Activated CD8-positive, alpha-beta T cell treated with anti-CD3 and anti-CD28 coated beads for 36 hours (primary cell): ENCODE measurements at regions of chr3 and their contacts with region 1.

Region 1: GRCh38 chr3:18740631-18741583 is 315.8 kb upstream of the SATB1 start:
- DNase-seq: peak; percentile 79
- ATAC-seq: peak; percentile 45
- H3K4me3 Mint-ChIP-seq: peak overlapping the region; percentile 58
- H3K27ac Mint-ChIP-seq: peak overlapping the region; percentile 92
- H3K4me1 Mint-ChIP-seq: peaks cover 90% of the 10 kb centered on the region
- H3K27me3 Mint-ChIP-seq: no peaks in the 10 kb centered on the region
- CTCF ChIP-seq: no peak

Region 2: DNA sequence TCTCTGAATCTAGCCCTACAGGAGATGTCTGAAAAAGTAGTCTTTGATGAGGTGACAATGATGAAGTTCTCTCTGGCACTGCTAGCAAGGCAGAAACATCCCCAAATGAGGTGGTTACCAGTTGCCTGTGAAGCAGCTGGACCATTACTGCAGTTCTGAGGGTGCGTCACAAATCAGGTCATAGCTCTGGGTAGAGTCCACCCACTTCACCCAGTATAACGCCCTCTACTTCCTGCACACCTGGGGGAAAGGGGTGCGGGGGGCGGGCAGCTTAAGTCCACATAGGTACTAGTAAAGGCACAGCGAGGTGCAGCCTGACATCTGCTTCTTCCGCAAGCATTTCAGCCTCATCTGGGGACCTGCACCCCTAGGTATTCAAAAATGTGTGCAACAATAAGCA is 302.3 kb before region 1 on chr3:
- CTCF ChIA-PET with region 1: no interaction called
- POLR2A ChIA-PET with region 1: interaction called, 12 read pairs
- intact Hi-C with region 1: no loop called
- DNase-seq: peak; percentile 80
- ATAC-seq: peak; percentile 82
- H3K4me3 Mint-ChIP-seq: peak overlapping the region; percentile 78
- H3K27ac Mint-ChIP-seq: peak overlapping the region; percentile 86
- H3K4me1 Mint-ChIP-seq: peaks cover 30% of the 10 kb centered on the region
- H3K27me3 Mint-ChIP-seq: no peaks in the 10 kb centered on the region
- CTCF ChIP-seq: no peak

Region 3: GRCh38 chr3:18531662-18532236 is 209.2 kb before region 1 on chr3:
- CTCF ChIA-PET with region 1: no interaction called
- POLR2A ChIA-PET with region 1: no interaction called
- intact Hi-C with region 1: no loop called
- DNase-seq: no peak
- ATAC-seq: peak; percentile 79
- H3K4me3 Mint-ChIP-seq: no peak overlapping the region
- H3K27ac Mint-ChIP-seq: no peak overlapping the region
- H3K4me1 Mint-ChIP-seq: peaks cover 13% of the 10 kb centered on the region
- H3K27me3 Mint-ChIP-seq: no peaks in the 10 kb centered on the region
- CTCF ChIP-seq: no peak

Region 4: DNA sequence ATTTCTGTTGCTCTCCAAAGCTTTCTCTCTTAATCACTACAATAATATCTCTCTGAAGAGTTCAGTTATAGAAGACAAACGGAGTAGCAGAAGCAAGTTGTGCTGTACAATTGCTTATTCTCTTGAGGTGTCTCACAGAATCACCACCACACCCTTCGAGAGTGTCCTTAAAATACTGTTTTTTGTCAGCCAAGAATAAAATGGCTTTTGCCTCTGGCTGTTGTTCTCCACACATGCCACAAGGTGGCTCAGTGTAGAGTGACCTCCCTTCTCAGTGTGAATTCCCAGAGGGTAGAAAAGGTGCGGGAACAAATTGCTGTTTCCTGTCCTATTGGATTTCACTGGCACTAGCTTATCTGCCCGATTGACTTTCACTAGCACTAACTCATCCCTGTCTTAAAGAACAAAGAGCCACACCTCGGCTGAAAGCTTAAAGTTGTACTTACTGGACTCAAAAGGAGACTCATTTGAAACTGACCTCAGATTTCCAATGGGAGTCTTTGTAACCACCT is 181.5 kb before region 1 on chr3:
- CTCF ChIA-PET with region 1: interaction called, 14 read pairs
- POLR2A ChIA-PET with region 1: interaction called, 20 read pairs
- intact Hi-C with region 1: loop called (anchors 1 kb)
- DNase-seq: peak; percentile 32
- ATAC-seq: peak; percentile 37
- H3K4me3 Mint-ChIP-seq: peak overlapping the region; percentile 13
- H3K27ac Mint-ChIP-seq: peak overlapping the region; percentile 95
- H3K4me1 Mint-ChIP-seq: peaks cover 67% of the 10 kb centered on the region
- H3K27me3 Mint-ChIP-seq: no peaks in the 10 kb centered on the region
- CTCF ChIP-seq: peak; percentile 83

Region 5: GRCh38 chr3:18679238-18679637 is 61.7 kb before region 1 on chr3:
- CTCF ChIA-PET with region 1: interaction called, 3 read pairs
- POLR2A ChIA-PET with region 1: interaction called, 6 read pairs
- intact Hi-C with region 1: loop called (anchors 1 kb)
- DNase-seq: peak; percentile 65
- ATAC-seq: peak; percentile 90
- H3K4me3 Mint-ChIP-seq: peak overlapping the region; percentile 55
- H3K27ac Mint-ChIP-seq: peak overlapping the region; percentile 93
- H3K4me1 Mint-ChIP-seq: peaks cover 78% of the 10 kb centered on the region
- H3K27me3 Mint-ChIP-seq: no peaks in the 10 kb centered on the region
- CTCF ChIP-seq: no peak

Region 6: GRCh38 chr3:18725668-18726407 is 15.1 kb before region 1 on chr3:
- CTCF ChIA-PET with region 1: interaction called, 3 read pairs
- POLR2A ChIA-PET with region 1: interaction called, 86 read pairs
- intact Hi-C with region 1: loop called (anchors 2 kb)
- DNase-seq: peak; percentile 63
- ATAC-seq: peak; percentile 64
- H3K4me3 Mint-ChIP-seq: peak overlapping the region; percentile 62
- H3K27ac Mint-ChIP-seq: peak overlapping the region; percentile 90
- H3K4me1 Mint-ChIP-seq: peaks cover 76% of the 10 kb centered on the region
- H3K27me3 Mint-ChIP-seq: no peaks in the 10 kb centered on the region
- CTCF ChIP-seq: no peak